Activated CD4-positive, alpha-beta memory T cell treated with anti-CD3 and anti-CD28 coated beads for 36 hours (primary cell): ENCODE measurements at regions of chr13 and their contacts with region 1.

Region 1: GRCh38 chr13:74230984-74231501 is 96.8 kb upstream of the KLF12 start:
- DNase-seq: no peak
- H3K4me3 Mint-ChIP-seq: peak overlapping the region; percentile 31
- H3K27ac Mint-ChIP-seq: peak overlapping the region; percentile 88
- H3K4me1 Mint-ChIP-seq: peaks cover 45% of the 10 kb centered on the region
- H3K27me3 Mint-ChIP-seq: no peaks in the 10 kb centered on the region

Region 2: GRCh38 chr13:73428137-73428536 is 802.9 kb before region 1 on chr13:
- CTCF ChIA-PET with region 1: no interaction called
- POLR2A ChIA-PET with region 1: no interaction called
- intact Hi-C with region 1: loop called (anchors 10 kb)
- DNase-seq: no peak
- H3K4me3 Mint-ChIP-seq: no peak overlapping the region
- H3K27ac Mint-ChIP-seq: no peak overlapping the region
- H3K4me1 Mint-ChIP-seq: peaks cover 3% of the 10 kb centered on the region
- H3K27me3 Mint-ChIP-seq: peaks cover 5% of the 10 kb centered on the region

Region 3: GRCh38 chr13:73938375-73939070 is 292.5 kb before region 1 on chr13:
- CTCF ChIA-PET with region 1: no interaction called
- POLR2A ChIA-PET with region 1: no interaction called
- intact Hi-C with region 1: loop called (anchors 5 kb)
- DNase-seq: no peak
- H3K4me3 Mint-ChIP-seq: no peak overlapping the region
- H3K27ac Mint-ChIP-seq: no peak overlapping the region
- H3K4me1 Mint-ChIP-seq: peaks cover 77% of the 10 kb centered on the region
- H3K27me3 Mint-ChIP-seq: no peaks in the 10 kb centered on the region

Region 4: DNA sequence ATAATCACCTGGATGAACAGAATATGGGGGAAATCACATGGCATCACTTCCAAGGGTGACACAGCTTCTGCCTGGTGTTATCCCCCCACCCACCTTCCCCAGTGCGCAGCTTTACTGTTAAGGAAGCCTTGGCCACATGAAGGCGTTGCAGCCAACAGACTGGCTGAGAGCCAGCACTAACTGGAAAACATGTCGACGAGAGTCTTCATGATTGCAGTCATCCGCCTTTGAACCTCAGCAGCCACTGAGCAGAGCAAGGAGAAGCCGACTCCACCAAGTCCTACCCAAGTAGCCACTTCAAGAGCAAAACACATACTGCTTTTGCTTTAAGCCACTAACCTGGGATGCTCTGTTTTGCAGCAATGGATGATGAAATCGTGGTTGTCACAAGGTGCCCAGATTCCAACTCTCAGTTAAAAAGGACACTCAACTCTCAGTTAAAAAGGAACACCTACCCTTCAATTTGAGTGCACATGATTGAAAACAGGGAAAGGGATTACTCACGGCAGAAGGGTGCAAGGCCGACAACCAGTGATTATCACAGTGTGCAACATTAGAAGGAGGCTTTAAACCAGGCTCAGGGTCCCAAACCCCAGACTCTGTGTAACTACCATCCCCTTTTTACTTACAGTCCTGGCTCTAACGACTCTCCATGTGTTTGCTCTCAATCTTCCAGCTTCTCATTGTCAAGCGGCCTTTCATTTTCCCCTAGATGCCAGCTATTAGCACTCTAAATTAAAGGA is 245.9 kb before region 1 on chr13:
- CTCF ChIA-PET with region 1: no interaction called
- POLR2A ChIA-PET with region 1: no interaction called
- intact Hi-C with region 1: loop called (anchors 5 kb)
- DNase-seq: peak; percentile 89
- H3K4me3 Mint-ChIP-seq: peak overlapping the region; percentile 63
- H3K27ac Mint-ChIP-seq: peak overlapping the region; percentile 90
- H3K4me1 Mint-ChIP-seq: peaks cover 46% of the 10 kb centered on the region
- H3K27me3 Mint-ChIP-seq: no peaks in the 10 kb centered on the region

Region 5: GRCh38 chr13:75326173-75327134 is 1095.4 kb after region 1 on chr13:
- CTCF ChIA-PET with region 1: no interaction called
- POLR2A ChIA-PET with region 1: no interaction called
- intact Hi-C with region 1: loop called (anchors 5 kb)
- DNase-seq: peak; percentile 78
- H3K4me3 Mint-ChIP-seq: peak overlapping the region; percentile 89
- H3K27ac Mint-ChIP-seq: peak overlapping the region; percentile 95
- H3K4me1 Mint-ChIP-seq: peaks cover 35% of the 10 kb centered on the region
- H3K27me3 Mint-ChIP-seq: no peaks in the 10 kb centered on the region